Right cardiac atrium (tissue), 5 donors: ENCODE measurements at regions of chr11 and their contacts with region 1.

Region 1: GRCh38 chr11:47800759-47801158 is 33.6 kb upstream of the FNBP4 start:
- DNase-seq: no peak
- ATAC-seq: peak; percentile 76 to 87
- H3K4me3 ChIP-seq: no peak overlapping the region
- H3K27ac ChIP-seq: no peak overlapping the region
- H3K4me1 ChIP-seq: no peaks in the 10 kb centered on the region
- H3K27me3 ChIP-seq: no peaks in the 10 kb centered on the region

Region 2: DNA sequence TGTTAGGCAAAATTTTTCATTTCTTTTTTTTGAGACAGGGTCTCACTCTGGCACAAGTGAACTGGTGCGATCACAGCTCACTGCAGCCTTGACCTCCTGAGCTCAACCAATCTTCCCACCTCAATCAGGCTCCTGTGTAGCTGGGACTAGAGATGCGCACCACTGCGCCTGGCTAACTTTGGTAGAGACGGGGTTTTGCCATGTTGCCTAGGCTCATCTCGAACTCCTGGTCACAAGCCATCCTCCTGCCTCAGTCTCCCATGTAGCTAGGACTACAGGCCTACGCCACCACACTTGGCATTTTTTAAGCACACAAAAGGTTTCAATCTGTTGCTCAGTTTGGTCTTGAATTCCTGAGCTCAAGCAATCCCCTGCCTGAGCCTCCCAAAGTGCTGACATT is 42.7 kb before region 1 on chr11:
- intact Hi-C with region 1: loop called in 1 of 4 experiments (anchors 10 kb)
- DNase-seq: no peak
- ATAC-seq: no peak
- H3K4me3 ChIP-seq: no peak overlapping the region
- H3K27ac ChIP-seq: no peak overlapping the region
- H3K4me1 ChIP-seq: no peaks in the 10 kb centered on the region
- H3K27me3 ChIP-seq: no peaks in the 10 kb centered on the region

Region 3: DNA sequence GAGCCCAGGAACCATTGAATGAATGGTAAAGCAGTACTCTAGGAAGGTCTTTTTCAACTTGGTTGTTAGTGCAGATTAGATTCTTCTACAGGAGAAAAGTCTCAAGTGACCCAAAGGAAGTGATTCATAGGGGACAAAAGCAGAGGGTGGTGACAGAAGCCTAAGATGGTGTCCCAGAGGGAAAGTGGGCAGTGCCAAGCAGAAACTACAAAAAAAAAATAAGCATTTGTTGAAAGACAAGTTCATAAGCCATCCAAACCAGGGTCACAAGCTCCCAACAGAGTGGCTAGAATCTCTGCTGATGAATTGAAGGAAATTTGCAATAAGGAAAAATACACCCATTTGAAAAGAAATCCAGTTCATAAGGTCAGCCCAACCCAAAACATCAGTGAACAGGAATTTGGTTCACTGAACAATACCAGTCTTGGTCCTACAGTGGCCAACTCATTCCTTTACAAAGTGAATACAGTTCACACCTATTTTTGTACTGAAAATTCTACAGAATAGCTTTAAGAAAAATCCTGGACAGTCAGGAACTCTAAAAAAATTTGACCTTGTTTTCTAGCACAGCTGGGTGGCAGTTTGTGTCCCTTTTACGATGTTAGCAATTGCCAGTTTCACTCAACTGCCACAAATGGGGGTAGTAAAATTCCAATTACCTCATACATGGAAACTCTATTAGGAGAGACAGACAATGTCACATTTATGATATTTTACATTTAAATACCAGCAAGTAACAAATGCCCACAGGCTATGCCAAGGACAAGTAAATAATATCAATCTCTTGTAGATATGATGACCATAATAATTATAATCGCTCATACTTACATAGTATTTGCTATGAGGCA is 69.0 kb after region 1 on chr11:
- intact Hi-C with region 1: no loop called
- DNase-seq: no peak
- ATAC-seq: peak; percentile 67 to 83
- H3K4me3 ChIP-seq: no peak overlapping the region
- H3K27ac ChIP-seq: no peak overlapping the region
- H3K4me1 ChIP-seq: no peaks in the 10 kb centered on the region
- H3K27me3 ChIP-seq: no peaks in the 10 kb centered on the region